ENCODE measurements at regions of chr13 and their contacts with region 1.

Region 1: DNA sequence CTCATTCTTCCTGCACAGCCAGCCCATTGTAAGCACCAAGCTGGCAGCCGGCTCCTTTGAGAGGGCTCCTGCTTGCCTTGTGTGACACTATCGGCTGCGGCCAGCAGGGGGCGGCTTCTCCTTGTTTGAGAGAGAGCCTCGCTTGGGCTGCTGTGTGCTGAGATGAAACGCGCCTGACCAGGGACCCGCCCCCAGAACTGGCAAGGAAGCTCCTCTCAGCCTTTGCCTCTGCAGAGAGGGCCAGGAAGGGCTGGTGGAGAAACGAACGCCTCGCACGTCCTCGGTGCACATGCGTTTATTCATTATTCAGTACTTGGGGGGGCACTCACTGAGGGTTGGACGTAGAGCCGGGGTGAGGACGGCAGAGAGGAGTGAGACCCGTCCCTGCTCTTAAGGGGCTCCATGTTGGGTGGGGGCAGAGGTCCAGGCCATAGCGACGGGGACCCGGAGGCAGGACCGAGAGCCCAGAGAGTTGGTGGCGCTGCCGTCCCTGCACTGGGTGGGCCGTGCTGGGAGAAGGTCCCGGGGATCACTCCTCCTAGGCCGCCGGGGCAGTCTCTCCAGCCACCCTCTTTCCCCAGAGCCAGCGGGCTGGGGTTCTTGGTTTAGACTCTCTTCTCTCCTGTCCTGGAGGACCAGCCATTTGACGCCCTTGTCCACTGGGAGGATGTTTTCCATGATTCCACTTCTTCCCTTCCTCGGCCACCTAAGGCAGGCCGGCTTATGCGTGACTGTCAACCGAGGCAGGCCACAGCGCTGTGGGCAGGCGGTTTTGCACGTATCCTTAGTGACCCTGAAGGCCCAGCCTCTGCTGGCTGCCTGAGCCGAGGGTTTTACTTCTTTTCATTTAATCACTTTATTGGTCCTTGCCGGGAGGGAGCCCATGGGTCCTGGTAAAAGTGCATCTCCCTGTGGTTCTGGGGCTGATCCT is 174.5 kb downstream of the KATNAL1 start:
- DNase-seq: peak; percentile 91 to 98 (median 95)
- ATAC-seq: peak; percentile 99
- H3K4me3 ChIP-seq: peak overlapping the region; percentile 16
- H3K4me3 Mint-ChIP-seq: peak overlapping the region in 8 of 10 donors; percentile 33 to 73 (median 64)
- H3K27ac ChIP-seq: no peak overlapping the region
- H3K27ac Mint-ChIP-seq: peak overlapping the region in 8 of 9 donors; percentile 11 to 89 (median 72)
- H3K4me1 ChIP-seq: peaks cover 4 to 7% of the 10 kb centered on the region in 2 donors
- H3K4me1 Mint-ChIP-seq: peaks cover 12 to 19% (median 17%) of the 10 kb centered on the region in 7 donors
- H3K27me3 ChIP-seq: no peaks in the 10 kb centered on the region
- H3K27me3 Mint-ChIP-seq: no peaks in the 10 kb centered on the region

Region 2: DNA sequence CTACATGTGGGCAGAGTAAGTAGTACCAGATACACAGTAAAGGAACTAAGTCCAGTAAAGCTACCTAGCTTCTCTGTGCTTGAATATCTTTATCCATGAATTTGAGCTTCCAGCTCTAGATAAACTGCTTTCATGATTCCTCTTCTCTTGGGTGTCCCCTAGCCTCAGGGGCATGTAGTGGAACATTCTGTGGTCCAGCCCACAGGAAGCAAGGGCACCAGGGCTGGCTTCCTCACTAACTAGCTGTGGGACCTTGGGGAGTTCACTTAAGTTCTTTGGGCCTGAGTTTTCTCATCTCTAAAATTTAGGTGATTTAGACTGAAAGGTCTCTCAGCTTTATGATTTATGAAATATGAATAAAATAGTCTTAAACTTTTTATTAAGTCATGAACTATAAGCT is 11.2 kb before region 1 on chr13:
- CTCF ChIA-PET with region 1: interaction called, 45 read pairs
- POLR2A ChIA-PET with region 1: interaction called, 10 read pairs
- intact Hi-C with region 1: no loop called
- DNase-seq: no peak
- ATAC-seq: no peak
- H3K4me3 ChIP-seq: no peak overlapping the region
- H3K4me3 Mint-ChIP-seq: no peak overlapping the region
- H3K27ac ChIP-seq: no peak overlapping the region
- H3K27ac Mint-ChIP-seq: peak overlapping the region in 1 of 9 donors; percentile 56
- H3K4me1 ChIP-seq: peaks cover 10 to 21% of the 10 kb centered on the region in 2 donors
- H3K4me1 Mint-ChIP-seq: peaks cover 33 to 48% (median 39%) of the 10 kb centered on the region in 7 donors
- H3K27me3 ChIP-seq: no peaks in the 10 kb centered on the region
- H3K27me3 Mint-ChIP-seq: peaks cover 0 to 4% (median 0%) of the 10 kb centered on the region in 5 donors

Region 3: DNA sequence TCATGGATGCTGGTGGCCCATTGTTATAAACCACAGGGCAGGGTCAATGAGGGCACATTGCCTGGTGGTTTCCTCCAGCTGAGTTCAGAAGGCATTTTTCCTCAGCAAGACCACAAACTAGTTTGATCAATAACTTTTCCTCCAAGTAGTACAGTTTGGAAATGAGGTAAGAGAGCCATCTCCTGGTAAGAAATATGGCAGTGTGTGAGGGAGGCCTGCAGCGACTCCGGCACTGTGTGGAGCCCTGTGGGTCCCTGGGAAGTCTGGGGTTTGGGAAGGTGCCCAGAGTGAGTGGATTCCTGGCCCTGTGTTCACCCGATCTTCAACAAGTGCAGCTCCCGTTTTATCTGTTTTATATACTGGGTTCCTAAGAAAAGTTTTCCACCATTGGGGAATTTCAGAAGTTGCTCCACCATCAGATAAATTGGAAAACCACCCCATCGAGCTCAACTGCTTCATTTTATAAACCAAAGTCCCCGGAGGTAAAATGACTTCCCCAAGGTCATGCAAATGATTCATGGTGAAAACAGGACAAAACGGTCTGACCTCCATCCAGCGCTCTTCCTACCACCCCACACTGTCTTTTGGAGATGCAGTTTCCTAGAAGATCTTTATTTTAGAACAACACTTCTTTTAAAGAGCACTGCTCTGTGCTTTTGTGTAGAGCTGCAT is 26.0 kb after region 1 on chr13:
- CTCF ChIA-PET with region 1: interaction called, 92 read pairs
- POLR2A ChIA-PET with region 1: interaction called, 4 read pairs
- intact Hi-C with region 1: loop called (anchors 1 kb)
- DNase-seq: peak in 4 of 9 donors; percentile 30 to 48 (median 42)
- ATAC-seq: peak; percentile 67
- H3K4me3 ChIP-seq: no peak overlapping the region
- H3K4me3 Mint-ChIP-seq: peak overlapping the region in 2 of 10 donors; percentile 23 to 35
- H3K27ac ChIP-seq: no peak overlapping the region
- H3K27ac Mint-ChIP-seq: peak overlapping the region in 6 of 9 donors; percentile 21 to 59 (median 42)
- H3K4me1 ChIP-seq: peaks cover 5 to 35% of the 10 kb centered on the region in 2 donors
- H3K4me1 Mint-ChIP-seq: peaks cover 21 to 44% (median 33%) of the 10 kb centered on the region in 7 donors
- H3K27me3 ChIP-seq: no peaks in the 10 kb centered on the region
- H3K27me3 Mint-ChIP-seq: no peaks in the 10 kb centered on the region

Region 4: DNA sequence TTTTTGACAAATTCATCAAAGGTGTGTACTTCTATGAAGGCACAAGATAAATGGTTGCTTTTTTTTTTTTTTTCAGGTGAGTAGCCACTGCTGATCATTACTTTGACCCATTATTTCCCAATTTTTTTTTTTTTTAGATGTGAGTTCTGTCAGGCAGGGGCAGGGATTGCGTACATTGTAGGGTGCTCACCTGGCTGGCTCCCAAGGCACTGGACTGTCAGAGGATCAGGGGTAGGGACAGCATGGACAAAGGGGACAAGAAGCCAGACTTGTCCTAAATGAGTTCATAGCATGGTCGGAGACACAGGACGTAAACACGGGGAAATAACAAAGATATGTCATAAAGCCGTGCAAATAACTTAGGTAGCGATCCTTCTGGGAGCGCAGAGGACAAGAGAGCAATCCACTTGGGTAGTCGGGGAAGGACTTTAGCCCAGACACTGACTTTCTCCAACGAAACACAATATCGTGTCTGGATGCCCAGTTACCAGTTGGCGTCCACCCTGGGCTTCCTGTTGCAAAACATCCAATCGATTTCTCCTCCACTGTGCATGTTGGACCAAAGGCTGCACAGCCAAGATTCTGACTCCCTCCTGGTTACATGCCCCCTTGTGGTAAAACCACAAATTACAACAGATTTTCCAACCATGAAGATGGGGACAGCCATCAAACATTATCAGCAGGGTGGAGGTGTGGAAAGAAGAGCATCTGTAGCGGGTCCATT is 201.9 kb after region 1 on chr13:
- CTCF ChIA-PET with region 1: interaction called, 3 read pairs
- POLR2A ChIA-PET with region 1: no interaction called
- intact Hi-C with region 1: loop called (anchors 1 kb)
- DNase-seq: peak in 5 of 9 donors; percentile 24 to 43 (median 37)
- ATAC-seq: peak; percentile 57
- H3K4me3 ChIP-seq: no peak overlapping the region
- H3K4me3 Mint-ChIP-seq: no peak overlapping the region
- H3K27ac ChIP-seq: no peak overlapping the region
- H3K27ac Mint-ChIP-seq: peak overlapping the region in 2 of 9 donors; percentile 8 to 9
- H3K4me1 ChIP-seq: peaks cover 0 to 8% of the 10 kb centered on the region in 2 donors
- H3K4me1 Mint-ChIP-seq: peaks cover 7 to 40% (median 19%) of the 10 kb centered on the region in 7 donors
- H3K27me3 ChIP-seq: no peaks in the 10 kb centered on the region
- H3K27me3 Mint-ChIP-seq: no peaks in the 10 kb centered on the region

Region 5: GRCh38 chr13:30551189-30551588 is 418.3 kb after region 1 on chr13:
- CTCF ChIA-PET with region 1: interaction called, 12 read pairs
- POLR2A ChIA-PET with region 1: no interaction called
- intact Hi-C with region 1: loop called (anchors 1 to 2 kb)
- DNase-seq: peak in 7 of 9 donors; percentile 22 to 63 (median 44)
- ATAC-seq: peak; percentile 82
- H3K4me3 ChIP-seq: no peak overlapping the region
- H3K4me3 Mint-ChIP-seq: no peak overlapping the region
- H3K27ac ChIP-seq: no peak overlapping the region
- H3K27ac Mint-ChIP-seq: peak overlapping the region in 1 of 9 donors; percentile 26
- H3K4me1 ChIP-seq: no peaks in the 10 kb centered on the region
- H3K4me1 Mint-ChIP-seq: peaks cover 0 to 6% (median 2%) of the 10 kb centered on the region in 7 donors
- H3K27me3 ChIP-seq: no peaks in the 10 kb centered on the region
- H3K27me3 Mint-ChIP-seq: peaks cover 0 to 11% (median 0%) of the 10 kb centered on the region in 5 donors

Region 6: GRCh38 chr13:30802953-30803478 is 670.1 kb after region 1 on chr13:
- CTCF ChIA-PET with region 1: interaction called, 3 read pairs
- POLR2A ChIA-PET with region 1: interaction called, 3 read pairs
- intact Hi-C with region 1: loop called (anchors 1 to 2 kb)
- DNase-seq: peak; percentile 54 to 83 (median 70)
- ATAC-seq: peak; percentile 97
- H3K4me3 ChIP-seq: peak overlapping the region; percentile 27
- H3K4me3 Mint-ChIP-seq: peak overlapping the region; percentile 17 to 75 (median 51)
- H3K27ac ChIP-seq: no peak overlapping the region
- H3K27ac Mint-ChIP-seq: peak overlapping the region in 1 of 9 donors; percentile 12
- H3K4me1 ChIP-seq: peaks cover 3 to 7% of the 10 kb centered on the region in 2 donors
- H3K4me1 Mint-ChIP-seq: peaks cover 5 to 19% (median 10%) of the 10 kb centered on the region in 7 donors
- H3K27me3 ChIP-seq: no peaks in the 10 kb centered on the region
- H3K27me3 Mint-ChIP-seq: peaks cover 0 to 5% (median 0%) of the 10 kb centered on the region in 5 donors

Measured in naive thymus-derived CD4-positive, alpha-beta T cell (primary cell).